ENCODE measurements at regions of chr17 and their contacts with region 1.

Region 1: DNA sequence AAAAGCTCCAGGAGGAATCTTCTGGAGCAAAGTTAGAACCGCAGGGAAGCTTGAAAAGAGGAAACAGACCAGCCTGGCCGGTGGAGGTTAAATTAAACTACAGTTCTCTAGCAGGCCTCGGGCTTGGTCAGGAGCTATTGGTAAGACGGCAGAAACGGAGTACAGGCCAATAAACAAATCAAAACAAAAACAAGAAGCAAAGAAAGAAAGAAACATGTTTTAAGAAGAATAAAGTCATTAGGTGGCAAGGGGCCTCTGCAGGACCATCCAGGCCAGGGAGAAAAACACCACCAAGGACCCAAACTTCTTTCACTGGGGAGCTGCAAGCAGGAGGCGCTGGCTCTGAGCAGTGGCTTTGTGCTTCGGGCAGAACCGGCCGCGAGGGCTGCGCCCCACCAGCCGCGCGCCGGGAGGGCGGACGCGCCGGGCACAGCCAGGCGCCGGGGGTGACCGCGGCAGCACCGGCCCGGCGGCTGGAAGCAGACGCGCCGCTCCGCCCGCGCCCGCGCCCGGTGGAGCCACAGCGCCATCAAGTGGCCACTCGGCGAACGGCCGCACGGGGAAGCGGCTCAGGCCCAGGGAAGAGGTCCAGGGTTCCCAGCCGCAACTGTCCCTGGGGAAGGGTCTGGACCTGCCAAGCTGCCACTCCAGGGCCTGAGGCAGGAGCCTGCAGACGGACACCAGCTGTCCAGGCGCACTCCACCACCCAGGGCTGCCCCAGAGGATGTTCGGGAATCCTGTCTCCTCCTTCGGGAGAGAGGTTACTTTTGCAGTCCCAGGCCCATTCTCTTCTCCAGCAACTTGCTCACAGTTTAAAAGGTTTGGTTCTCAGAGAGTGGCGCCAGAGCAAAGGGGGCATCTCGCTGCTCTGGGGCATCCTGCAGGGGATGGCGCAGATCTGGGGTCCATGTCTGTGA is 419.4 kb downstream of the SOX9 start:
- DNase-seq: peak; percentile 19 to 73
- H3K4me3 ChIP-seq: no peak overlapping the region
- H3K4me1 ChIP-seq: no peaks in the 10 kb centered on the region
- H3K27me3 ChIP-seq: no peaks in the 10 kb centered on the region

Region 2: GRCh38 chr17:70636517-70637133 is 1903.6 kb before region 1 on chr17:
- in situ Hi-C with region 1: loop called (anchors 10 kb)
- DNase-seq: peak; percentile 16 to 27
- H3K4me3 ChIP-seq: no peak overlapping the region
- H3K4me1 ChIP-seq: no peaks in the 10 kb centered on the region
- H3K27me3 ChIP-seq: no peaks in the 10 kb centered on the region

Measured in HAP-1 (cell line).